ENCODE measurements at regions of chr22 and their contacts with region 1.

Region 1: DNA sequence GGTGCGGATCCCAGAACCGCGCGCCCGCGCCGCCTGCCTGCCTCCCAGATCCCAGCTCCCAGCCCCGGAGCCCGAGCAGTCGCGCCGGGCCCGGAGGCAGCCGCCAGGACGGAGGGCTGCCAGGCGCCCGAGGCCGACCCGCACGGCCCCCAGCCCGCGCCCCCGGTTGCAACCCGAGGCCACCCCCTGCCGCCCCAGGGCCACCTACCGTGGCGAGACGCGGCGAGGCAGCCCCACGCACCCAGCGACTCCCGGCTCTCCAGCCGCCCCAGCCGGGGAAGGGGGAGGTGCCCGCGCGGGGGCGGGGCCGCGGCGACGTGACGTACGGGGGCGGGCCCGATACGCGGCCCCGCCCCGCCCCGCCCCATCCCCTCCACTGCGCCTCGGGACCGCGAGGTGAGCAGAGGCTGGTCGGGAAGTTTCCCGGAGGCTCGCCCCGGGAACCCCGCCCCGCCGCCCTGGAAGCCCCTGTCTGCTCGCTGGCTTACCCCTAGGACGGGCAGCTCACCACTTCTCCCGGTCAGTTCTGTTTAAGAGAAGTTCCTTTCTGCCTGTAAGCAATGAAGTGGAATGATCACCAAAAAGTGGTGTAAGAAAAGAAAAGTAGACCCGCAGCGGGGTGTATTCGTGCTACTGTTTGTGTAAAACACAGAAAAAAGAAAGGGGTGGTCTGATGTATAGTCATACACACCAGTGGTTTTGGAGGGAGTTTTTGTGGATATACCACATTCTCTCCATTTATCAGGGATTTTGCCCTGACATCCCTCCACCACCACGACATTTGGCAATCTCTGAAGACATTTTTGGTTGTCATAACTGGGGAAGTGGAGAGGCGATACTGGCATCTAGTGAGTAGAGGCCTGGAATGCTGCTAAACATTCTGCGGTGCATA is at the start of gene TPST2:
- DNase-seq: peak; percentile 78 to 85
- ATAC-seq: peak; percentile 93 to 97 (median 95)
- H3K4me3 ChIP-seq: peak within 1 kb of the TSS; percentile 69 to 98 (median 96)
- H3K27ac ChIP-seq: peak within 1 kb of the TSS; percentile 62 to 95 (median 88)
- H3K4me1 ChIP-seq: peaks cover 4 to 78% (median 42%) of the 10 kb centered on the region in 9 donors
- H3K27me3 ChIP-seq: no peaks in the 10 kb centered on the region
- CTCF ChIP-seq: peak in 2 of 9 donors; percentile 29 to 38
- total RNA-seq, gene TPST2: 11.1 to 35.1 (median 19.0) TPM

Region 2: DNA sequence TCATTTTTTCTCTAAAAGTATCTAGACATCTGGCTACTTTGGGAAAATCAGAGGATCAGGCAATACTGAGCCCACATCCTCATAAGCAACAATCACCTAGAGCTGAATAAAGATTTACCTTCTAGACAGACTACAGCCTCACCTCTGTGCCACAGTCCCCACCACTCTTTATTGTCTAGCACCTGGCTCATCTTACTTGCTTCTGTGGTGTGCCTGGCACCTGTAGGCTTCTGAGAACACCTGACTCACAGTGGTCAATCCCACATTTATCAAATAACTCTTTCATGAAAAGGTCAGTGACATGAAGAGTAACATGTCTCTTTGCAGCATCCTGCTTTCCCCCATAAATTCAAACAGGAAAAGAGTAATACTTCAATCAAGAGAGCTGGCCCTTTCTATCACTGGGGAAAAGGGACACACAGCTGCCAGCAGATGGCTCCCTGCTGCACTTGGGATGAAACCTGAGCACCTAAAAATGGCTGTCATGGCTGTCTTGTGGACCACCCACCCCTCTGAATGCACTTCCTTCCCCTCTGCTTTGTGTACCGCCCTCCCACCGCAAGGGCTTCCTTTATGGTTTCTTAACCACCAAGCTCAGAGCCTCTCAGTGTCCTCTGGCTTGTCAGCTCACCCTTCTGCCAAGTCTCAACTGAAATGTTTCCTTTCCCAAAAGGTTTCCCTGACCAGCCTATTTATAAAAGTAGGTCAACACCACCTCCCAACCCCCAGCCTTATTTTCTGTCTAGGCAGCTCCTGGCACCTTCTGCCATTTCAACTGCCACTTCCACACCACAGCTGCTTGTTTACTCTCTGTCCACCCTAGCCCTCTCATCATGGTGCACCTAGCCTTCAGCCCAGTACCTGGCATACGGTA is 87.2 kb before region 1 on chr22:
- intact Hi-C with region 1: loop called in 1 of 10 experiments (anchors 5 kb)
- DNase-seq: peak; percentile 25 to 41
- ATAC-seq: peak; percentile 78 to 93 (median 85)
- H3K4me3 ChIP-seq: peak overlapping the region in 2 of 10 donors; percentile 5 to 16
- H3K27ac ChIP-seq: peak overlapping the region; percentile 29 to 80 (median 69)
- H3K4me1 ChIP-seq: peaks cover 4 to 27% (median 22%) of the 10 kb centered on the region in 9 donors
- H3K27me3 ChIP-seq: no peaks in the 10 kb centered on the region
- CTCF ChIP-seq: peak; percentile 7 to 69 (median 58)

Region 3: GRCh38 chr22:26529345-26529744 is 60.7 kb before region 1 on chr22:
- intact Hi-C with region 1: loop called in 2 of 10 experiments (anchors 10 kb)
- DNase-seq: no peak
- ATAC-seq: peak in 2 of 8 donors; percentile 10 to 23
- H3K4me3 ChIP-seq: no peak overlapping the region
- H3K27ac ChIP-seq: peak overlapping the region in 5 of 10 donors; percentile 5 to 81 (median 41)
- H3K4me1 ChIP-seq: peaks cover 0 to 51% (median 20%) of the 10 kb centered on the region in 9 donors
- H3K27me3 ChIP-seq: no peaks in the 10 kb centered on the region
- CTCF ChIP-seq: no peak

Region 4: DNA sequence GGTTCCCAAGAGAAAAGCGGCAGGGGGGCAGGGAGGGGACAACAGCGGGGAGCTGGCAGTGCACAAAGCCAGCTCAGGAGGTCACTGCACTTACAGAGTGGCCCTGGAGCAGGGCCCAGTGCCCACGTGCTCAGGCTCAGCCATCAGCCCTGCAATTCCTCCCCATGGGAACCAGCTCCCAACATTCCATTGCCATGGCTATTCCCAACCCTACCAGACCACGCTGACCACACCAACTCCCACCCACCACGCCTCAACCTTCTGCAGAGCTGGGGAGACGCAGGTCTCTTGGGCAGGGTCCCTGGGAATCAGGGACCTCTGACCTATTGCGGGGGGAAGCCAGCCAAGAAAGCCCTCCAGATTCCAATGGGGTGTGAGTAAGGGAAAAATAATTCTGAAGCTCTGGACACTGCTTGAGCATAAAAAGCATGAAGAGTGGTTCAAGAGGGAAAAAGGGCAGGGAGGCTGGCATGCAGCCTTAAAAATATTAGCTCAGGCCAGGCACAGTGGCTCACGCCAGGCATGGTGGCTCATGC is 39.5 kb before region 1 on chr22:
- intact Hi-C with region 1: loop called in 1 of 10 experiments (anchors 5 kb)
- DNase-seq: peak; percentile 67
- ATAC-seq: peak; percentile 79 to 92 (median 90)
- H3K4me3 ChIP-seq: peak overlapping the region in 1 of 10 donors; percentile 14
- H3K27ac ChIP-seq: peak overlapping the region; percentile 42 to 88 (median 80)
- H3K4me1 ChIP-seq: peaks cover 10 to 78% (median 67%) of the 10 kb centered on the region in 9 donors
- H3K27me3 ChIP-seq: no peaks in the 10 kb centered on the region
- CTCF ChIP-seq: no peak

Region 5: GRCh38 chr22:26756675-26757293 is 166.7 kb after region 1 on chr22:
- intact Hi-C with region 1: no loop called
- DNase-seq: peak; percentile 48 to 70
- ATAC-seq: peak; percentile 78 to 92 (median 86)
- H3K4me3 ChIP-seq: peak overlapping the region in 8 of 10 donors; percentile 12 to 38 (median 35)
- H3K27ac ChIP-seq: no peak overlapping the region
- H3K4me1 ChIP-seq: no peaks in the 10 kb centered on the region
- H3K27me3 ChIP-seq: no peaks in the 10 kb centered on the region
- CTCF ChIP-seq: peak; percentile 87 to 95 (median 91)

Region 6: DNA sequence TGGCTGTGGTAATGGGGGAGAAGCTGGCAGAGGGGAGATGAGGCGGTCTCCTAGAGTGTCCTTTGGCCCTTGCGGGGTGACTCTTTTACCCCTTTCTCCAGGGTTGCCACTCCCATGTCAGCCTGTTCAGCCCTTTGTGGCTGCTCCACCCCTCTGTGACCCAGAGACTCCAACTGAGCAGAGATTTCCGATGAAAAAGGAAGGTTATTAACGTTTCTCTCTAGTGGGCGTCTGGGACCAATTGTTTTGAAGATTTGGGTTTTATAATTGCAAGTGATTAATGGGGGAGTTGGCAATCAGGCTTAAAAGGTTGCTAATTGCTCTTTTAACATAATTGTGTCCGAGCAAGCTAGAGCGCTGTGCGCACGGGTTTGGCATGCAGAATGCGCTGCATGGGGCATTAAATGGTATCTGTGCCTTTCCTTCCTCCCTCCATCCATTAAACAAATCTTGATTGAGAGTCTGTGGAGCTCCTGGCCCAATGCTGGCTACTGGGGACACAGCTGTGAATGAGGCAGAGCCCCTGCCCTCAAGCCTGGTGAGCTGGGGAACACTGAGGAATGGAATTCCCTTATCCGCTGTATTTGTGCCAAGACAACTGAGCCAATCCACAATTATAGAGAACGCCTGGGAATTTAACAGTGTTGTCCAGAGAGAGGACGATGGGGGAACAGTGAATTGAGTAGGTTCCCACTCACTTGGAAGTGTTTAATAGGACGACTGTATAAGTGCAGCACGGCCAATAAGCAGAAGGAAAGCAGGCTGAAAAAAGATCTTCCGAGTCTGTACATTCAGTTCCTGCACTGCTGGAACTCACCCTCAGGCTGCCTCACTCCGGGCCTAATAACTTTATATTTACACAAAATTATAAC is 363.2 kb after region 1 on chr22:
- intact Hi-C with region 1: no loop called
- DNase-seq: no peak
- ATAC-seq: peak in 1 of 8 donors; percentile 58
- H3K4me3 ChIP-seq: no peak overlapping the region
- H3K27ac ChIP-seq: no peak overlapping the region
- H3K4me1 ChIP-seq: peaks cover 0 to 10% (median 0%) of the 10 kb centered on the region in 9 donors
- H3K27me3 ChIP-seq: peaks cover 0 to 65% (median 53%) of the 10 kb centered on the region in 7 donors
- CTCF ChIP-seq: no peak

Measured in heart right ventricle (tissue), 16 donors.